Naive thymus-derived CD4-positive, alpha-beta T cell (primary cell): ENCODE measurements at regions of chr16 and their contacts with region 1.

Region 1: GRCh38 chr16:68520649-68521086 is 18.4 kb upstream of the ZFP90 start:
- DNase-seq: peak; percentile 70 to 91 (median 86)
- ATAC-seq: peak; percentile 100
- H3K4me3 ChIP-seq: peak overlapping the region; percentile 21
- H3K4me3 Mint-ChIP-seq: peak overlapping the region in 9 of 10 donors; percentile 49 to 73 (median 67)
- H3K27ac ChIP-seq: peak overlapping the region; percentile 20
- H3K27ac Mint-ChIP-seq: peak overlapping the region in 6 of 9 donors; percentile 68 to 92 (median 87)
- H3K4me1 ChIP-seq: peaks cover 0 to 5% of the 10 kb centered on the region in 2 donors
- H3K4me1 Mint-ChIP-seq: peaks cover 0 to 12% (median 7%) of the 10 kb centered on the region in 7 donors
- H3K27me3 ChIP-seq: no peaks in the 10 kb centered on the region
- H3K27me3 Mint-ChIP-seq: peaks cover 0 to 3% (median 0%) of the 10 kb centered on the region in 5 donors

Region 2: GRCh38 chr16:68237243-68238028 is 283.2 kb before region 1 on chr16:
- CTCF ChIA-PET with region 1: no interaction called
- POLR2A ChIA-PET with region 1: no interaction called
- intact Hi-C with region 1: loop called in 1 of 2 experiments (anchors 5 kb)
- DNase-seq: peak; percentile 71 to 90 (median 83)
- ATAC-seq: peak; percentile 88
- H3K4me3 ChIP-seq: peak overlapping the region; percentile 91
- H3K4me3 Mint-ChIP-seq: peak overlapping the region; percentile 90 to 99 (median 96)
- H3K27ac ChIP-seq: peak overlapping the region; percentile 67
- H3K27ac Mint-ChIP-seq: peak overlapping the region; percentile 72 to 95 (median 87)
- H3K4me1 ChIP-seq: peaks cover 6 to 10% of the 10 kb centered on the region in 2 donors
- H3K4me1 Mint-ChIP-seq: peaks cover 23 to 45% (median 34%) of the 10 kb centered on the region in 7 donors
- H3K27me3 ChIP-seq: no peaks in the 10 kb centered on the region
- H3K27me3 Mint-ChIP-seq: peaks cover 0 to 13% (median 0%) of the 10 kb centered on the region in 5 donors

Region 3: DNA sequence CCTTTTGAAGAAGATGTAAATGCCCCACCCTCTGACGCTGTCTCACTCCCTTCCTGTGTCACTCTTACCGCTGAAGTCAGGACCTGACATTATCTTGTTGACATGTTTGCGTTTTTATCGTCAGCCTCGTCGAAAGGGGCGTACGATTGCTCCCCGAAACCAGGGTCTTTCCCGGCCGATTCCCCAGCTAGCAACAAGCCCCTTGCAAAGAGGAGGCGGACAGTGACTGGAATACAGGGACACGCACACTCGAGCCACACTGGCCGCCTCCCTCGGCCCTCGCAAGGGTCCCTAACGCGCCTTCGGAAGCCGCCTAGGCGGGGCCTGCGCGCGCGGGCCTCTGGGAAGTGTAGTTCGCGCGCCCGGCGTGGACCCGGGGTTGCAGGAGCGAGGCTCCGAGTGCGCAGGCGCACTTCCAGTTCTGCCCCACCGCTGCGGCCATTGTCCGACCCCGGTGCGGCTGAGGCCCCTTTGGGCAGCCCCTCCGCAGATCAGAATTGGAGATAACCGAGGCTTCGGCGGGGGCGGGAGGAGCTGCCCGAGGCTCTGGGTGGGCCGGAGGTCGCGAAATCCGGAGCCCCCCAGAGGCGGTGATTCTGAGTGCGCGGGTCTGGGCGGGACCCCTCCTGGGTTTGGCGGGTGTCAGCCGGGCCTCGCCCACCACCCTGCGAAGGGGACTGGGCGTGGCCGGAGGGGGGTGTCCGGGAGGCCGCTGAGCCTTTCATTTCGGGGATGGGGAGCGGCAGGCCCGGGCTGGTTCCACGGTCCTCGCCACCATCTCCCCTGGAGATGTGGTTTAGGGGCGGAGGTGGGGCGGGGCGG is 18.4 kb after region 1 on chr16 and contains the start of gene ZFP90:
- CTCF ChIA-PET with region 1: interaction called, 5 read pairs
- POLR2A ChIA-PET with region 1: interaction called, 5 read pairs
- intact Hi-C with region 1: loop called (anchors 1 kb)
- DNase-seq: peak; percentile 82 to 91 (median 88)
- ATAC-seq: peak; percentile 94
- H3K4me3 ChIP-seq: peak within 1 kb of the TSS; percentile 66
- H3K4me3 Mint-ChIP-seq: peak within 1 kb of the TSS; percentile 86 to 99 (median 97)
- H3K27ac ChIP-seq: peak within 1 kb of the TSS; percentile 94
- H3K27ac Mint-ChIP-seq: peak within 1 kb of the TSS; percentile 97 to 100 (median 100)
- H3K4me1 ChIP-seq: peaks cover 13 to 14% of the 10 kb centered on the region in 2 donors
- H3K4me1 Mint-ChIP-seq: peaks cover 13 to 32% (median 24%) of the 10 kb centered on the region in 7 donors
- H3K27me3 ChIP-seq: no peaks in the 10 kb centered on the region
- H3K27me3 Mint-ChIP-seq: no peaks in the 10 kb centered on the region
- total RNA-seq, gene ZFP90: 25.7 to 49.4 (median 38.8) TPM